Heart right ventricle (tissue), 16 donors: ENCODE measurements at regions of chr1 and their contacts with region 1.

Region 1: DNA sequence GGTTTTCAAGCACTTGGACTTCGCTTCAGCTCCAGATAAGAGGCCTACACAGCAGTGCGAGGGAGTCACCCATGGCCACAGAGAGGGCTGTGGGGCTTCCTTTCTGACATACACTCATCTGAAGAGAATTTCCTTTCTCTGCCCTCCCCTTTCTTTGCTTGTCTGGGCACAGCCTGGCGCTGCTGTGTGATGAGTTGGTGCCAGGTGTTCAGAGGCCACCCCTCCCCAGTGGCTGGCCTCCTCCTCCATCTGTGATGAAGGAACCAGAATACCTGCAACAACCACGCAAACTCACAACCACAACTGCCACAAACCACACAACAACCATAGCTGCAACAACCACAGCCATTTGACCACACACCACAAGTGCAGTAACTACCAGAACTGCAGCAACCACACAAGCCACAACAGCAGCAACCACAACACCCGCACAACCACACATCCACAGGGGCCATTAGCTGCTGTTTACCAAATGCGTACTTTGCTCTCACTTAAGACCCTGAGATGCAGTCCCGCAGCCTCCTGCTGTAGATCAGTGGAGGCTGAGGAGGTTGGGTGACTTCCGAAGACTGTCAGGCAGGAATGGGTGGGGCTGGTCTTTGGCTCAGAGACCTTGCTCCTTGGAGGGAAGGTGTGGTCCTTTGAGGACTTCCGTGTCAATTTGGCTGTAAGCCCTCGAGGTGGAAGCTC is 71.1 kb downstream of the IER5 start:
- DNase-seq: peak in 1 of 2 donors; percentile 41
- ATAC-seq: peak in 7 of 8 donors; percentile 50 to 79 (median 71)
- H3K4me3 ChIP-seq: no peak overlapping the region
- H3K27ac ChIP-seq: no peak overlapping the region
- H3K4me1 ChIP-seq: peaks cover 0 to 30% (median 21%) of the 10 kb centered on the region in 9 donors
- H3K27me3 ChIP-seq: no peaks in the 10 kb centered on the region
- CTCF ChIP-seq: no peak

Region 2: DNA sequence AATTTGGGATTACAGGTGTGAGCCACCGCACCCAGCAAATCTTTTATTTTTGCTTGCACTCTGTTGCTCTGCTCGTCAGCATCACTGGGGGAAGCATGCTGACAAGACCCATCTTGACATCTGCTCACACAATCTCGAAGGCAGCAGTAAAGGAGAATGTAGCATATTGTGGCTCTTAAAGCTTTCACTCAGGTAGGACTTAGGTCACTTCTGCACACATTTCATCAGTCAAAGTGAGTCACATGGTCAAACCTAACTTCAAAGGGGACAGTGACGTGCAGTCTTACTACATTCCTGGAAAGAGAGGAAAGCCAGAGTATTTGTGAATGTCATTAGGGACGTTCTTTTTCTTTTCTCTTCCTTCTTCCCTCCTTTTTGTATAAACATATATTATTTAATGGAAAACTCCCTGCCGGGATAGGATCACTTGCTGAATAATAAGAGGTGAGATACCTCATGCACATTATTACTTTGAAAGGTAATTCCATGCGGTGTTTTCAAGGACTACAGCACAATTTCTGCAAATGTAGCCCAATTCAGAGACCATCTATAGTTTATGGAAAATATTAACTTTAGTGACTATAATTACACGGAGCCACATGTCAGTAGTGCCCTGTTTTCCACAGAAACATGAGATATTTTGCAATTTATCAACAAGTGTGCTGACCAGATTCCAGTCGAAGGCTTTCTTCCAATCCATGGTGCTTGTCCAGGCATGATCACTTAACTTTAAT is 638.0 kb before region 1 on chr1:
- intact Hi-C with region 1: loop called in 6 of 10 experiments (anchors 5 to 10 kb)
- DNase-seq: no peak
- ATAC-seq: no peak
- H3K4me3 ChIP-seq: no peak overlapping the region
- H3K27ac ChIP-seq: peak overlapping the region in 2 of 10 donors; percentile 23 to 52
- H3K4me1 ChIP-seq: peaks cover 0 to 51% (median 20%) of the 10 kb centered on the region in 9 donors
- H3K27me3 ChIP-seq: no peaks in the 10 kb centered on the region
- CTCF ChIP-seq: no peak

Region 3: GRCh38 chr1:180881806-180882509 is 277.6 kb before region 1 on chr1:
- intact Hi-C with region 1: loop called in 3 of 10 experiments (anchors 5 to 10 kb)
- DNase-seq: no peak
- ATAC-seq: peak; percentile 47 to 69 (median 59)
- H3K4me3 ChIP-seq: no peak overlapping the region
- H3K27ac ChIP-seq: peak overlapping the region in 1 of 10 donors; percentile 2
- H3K4me1 ChIP-seq: peaks cover 0 to 19% (median 4%) of the 10 kb centered on the region in 9 donors
- H3K27me3 ChIP-seq: no peaks in the 10 kb centered on the region
- CTCF ChIP-seq: peak in 8 of 9 donors; percentile 36 to 70 (median 54)

Region 4: DNA sequence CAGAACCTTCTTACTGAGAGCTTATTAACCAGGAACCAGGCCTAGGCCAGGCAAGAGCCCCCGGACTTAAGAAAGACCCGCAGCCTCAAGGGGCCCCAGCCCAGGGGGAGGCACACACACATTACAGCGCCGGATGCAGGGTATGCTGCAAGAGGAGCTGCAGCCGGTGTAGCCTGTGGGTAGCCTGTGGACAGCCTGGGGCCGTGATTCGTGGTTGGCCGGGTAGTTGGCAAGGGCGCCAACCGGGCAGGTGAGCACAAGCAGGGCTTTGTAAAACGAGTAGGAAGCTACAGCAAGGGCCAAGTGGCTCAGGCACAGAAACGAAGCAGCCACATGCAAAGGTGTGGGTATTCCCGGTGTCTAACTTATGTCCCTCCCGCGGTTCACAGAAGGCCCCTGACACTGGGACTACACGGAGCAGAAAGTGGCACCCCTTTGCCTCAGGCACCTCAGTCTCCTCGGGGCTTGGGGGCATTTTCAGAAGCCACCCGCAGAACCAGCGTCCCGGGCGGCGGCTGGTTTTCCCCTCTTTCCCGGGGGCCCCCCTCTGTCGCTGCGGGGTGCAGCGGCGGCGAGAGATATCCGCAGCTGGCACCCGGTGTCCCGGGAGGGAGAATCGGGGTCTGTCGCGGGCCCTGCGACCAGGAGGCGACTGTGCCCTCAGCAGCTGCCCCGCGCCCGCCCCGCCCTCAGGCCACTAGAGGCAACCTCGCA is 206.1 kb before region 1 on chr1:
- intact Hi-C with region 1: no loop called
- DNase-seq: no peak
- ATAC-seq: peak in 3 of 8 donors; percentile 10 to 15 (median 12)
- H3K4me3 ChIP-seq: peak overlapping the region; percentile 39 to 73 (median 58)
- H3K27ac ChIP-seq: peak overlapping the region in 5 of 10 donors; percentile 0 to 44 (median 35)
- H3K4me1 ChIP-seq: peaks cover 0 to 23% (median 13%) of the 10 kb centered on the region in 9 donors
- H3K27me3 ChIP-seq: no peaks in the 10 kb centered on the region
- CTCF ChIP-seq: no peak

Region 5: DNA sequence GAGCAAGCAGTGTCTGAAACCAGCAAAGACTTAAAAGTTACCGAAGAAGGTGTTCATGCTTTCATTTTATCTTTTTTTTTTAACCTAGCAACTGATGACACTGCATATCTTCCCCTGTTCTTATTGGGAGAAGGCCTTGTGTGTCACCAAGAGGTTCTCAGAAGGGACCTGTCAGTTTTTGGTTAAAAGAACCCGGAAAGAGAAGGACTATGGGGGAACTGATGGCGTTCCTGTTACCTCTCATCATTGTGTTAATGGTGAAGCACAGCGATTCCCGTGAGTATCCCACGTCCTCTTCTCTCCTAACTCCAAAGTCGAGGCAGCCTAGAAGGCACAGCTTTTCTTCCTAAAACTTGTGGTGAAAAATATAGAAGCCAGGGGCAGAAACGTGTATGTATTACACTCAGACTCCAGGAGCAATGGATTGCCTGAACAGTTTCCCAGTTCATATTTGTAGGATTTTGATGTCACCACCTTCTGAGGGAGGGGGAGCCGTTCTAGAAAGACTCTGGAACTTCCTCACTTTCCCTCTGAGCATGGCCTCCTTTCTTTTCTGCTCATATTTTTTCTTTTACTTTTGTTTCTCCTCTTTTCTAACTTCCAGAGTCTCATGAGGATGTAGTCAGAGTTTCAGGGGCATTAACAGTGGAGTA is 125.7 kb before region 1 on chr1 and contains the start of gene MR1:
- intact Hi-C with region 1: loop called in 1 of 10 experiments (anchors 5 kb)
- DNase-seq: peak in 1 of 2 donors; percentile 45
- ATAC-seq: peak; percentile 81 to 97 (median 94)
- H3K4me3 ChIP-seq: peak within 1 kb of the TSS in 9 of 10 donors; percentile 41 to 68 (median 50)
- H3K27ac ChIP-seq: peak within 1 kb of the TSS; percentile 75 to 99 (median 84)
- H3K4me1 ChIP-seq: peaks cover 6 to 63% (median 19%) of the 10 kb centered on the region in 9 donors
- H3K27me3 ChIP-seq: no peaks in the 10 kb centered on the region
- CTCF ChIP-seq: no peak
- total RNA-seq, gene MR1: 1.8 to 8.2 (median 3.2) TPM